ENCODE measurements at regions of chr3 and their contacts with region 1.

Region 1: DNA sequence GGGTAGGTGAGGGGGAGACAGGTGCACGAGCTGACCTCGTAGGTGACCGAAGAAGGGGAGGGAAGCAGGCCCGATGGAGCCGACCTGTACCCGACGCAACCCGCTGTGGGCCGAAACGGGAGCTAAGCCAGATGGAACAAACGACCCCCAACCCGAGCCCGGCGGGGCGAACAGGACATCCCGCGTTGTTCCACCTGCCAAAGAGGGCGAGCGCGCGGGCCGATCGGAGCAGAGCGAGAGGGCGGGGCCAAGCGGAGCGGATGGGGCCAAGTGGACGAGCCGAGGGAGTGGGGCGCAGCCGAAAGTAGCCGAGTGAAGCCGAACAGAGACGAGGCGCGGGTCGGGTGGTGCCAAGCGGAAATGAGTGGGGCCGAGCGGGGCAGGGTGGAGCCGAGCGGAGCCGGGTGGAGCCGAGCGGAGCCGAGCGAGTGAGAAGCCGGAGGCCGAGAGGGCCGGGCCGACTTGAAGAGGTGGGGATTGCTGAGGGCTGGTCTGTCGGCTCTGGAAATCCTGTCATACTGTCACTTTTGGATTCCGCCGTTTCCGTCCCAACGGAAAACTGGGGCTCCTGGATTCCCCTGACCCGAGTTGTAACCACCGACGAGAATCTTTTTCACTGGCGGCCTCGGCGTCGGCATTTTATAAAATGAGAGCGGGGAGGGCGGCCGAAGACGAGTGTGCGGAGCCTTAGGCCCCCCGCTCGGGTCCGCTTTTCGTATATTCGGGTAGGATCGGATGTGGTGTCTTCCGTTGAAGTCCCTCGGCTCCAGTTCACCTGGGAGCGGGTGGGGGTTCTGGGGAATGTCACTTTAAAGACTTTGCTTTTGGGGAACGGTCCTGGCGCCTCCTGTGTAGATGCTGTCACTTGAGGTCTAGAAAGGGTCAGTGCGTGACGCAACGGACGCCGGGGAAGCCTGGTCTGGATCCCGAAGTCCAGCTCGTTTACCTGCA is 15.6 kb upstream of the WNT7A start:
- DNase-seq: peak; percentile 86
- ATAC-seq: peak; percentile 99
- H3K4me3 Mint-ChIP-seq: peak overlapping the region; percentile 89
- H3K27ac Mint-ChIP-seq: peak overlapping the region; percentile 78
- H3K4me1 Mint-ChIP-seq: peaks cover 41% of the 10 kb centered on the region
- H3K27me3 Mint-ChIP-seq: peaks cover 5% of the 10 kb centered on the region
- CTCF ChIP-seq: no peak

Region 2: GRCh38 chr3:13673209-13673608 is 222.2 kb before region 1 on chr3:
- CTCF ChIA-PET with region 1: no interaction called
- POLR2A ChIA-PET with region 1: no interaction called
- intact Hi-C with region 1: no loop called
- DNase-seq: no peak
- ATAC-seq: no peak
- H3K4me3 Mint-ChIP-seq: no peak overlapping the region
- H3K27ac Mint-ChIP-seq: no peak overlapping the region
- H3K4me1 Mint-ChIP-seq: no peaks in the 10 kb centered on the region
- H3K27me3 Mint-ChIP-seq: peaks cover 17% of the 10 kb centered on the region
- CTCF ChIP-seq: no peak

Region 3: DNA sequence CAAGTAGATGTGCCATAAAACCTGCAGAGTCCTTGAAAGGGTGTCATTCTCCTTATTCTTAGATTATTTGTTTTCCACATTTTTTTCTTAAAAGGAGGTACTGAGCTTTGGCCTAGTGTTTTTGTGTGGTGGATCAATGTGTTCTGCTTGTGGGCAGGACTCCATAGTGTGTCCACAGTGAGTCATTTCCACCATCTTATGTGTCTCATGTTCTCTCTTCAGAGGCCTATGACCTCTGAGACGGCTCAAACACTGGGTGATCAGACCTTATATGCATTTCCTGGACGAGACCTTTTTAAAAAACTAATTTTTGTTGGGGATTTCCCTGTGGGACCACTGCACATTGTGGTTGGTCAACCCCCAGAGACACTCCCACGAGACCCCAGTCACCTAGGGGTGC is 135.8 kb after region 1 on chr3:
- CTCF ChIA-PET with region 1: no interaction called
- POLR2A ChIA-PET with region 1: no interaction called
- intact Hi-C with region 1: no loop called
- DNase-seq: no peak
- ATAC-seq: no peak
- H3K4me3 Mint-ChIP-seq: no peak overlapping the region
- H3K27ac Mint-ChIP-seq: no peak overlapping the region
- H3K4me1 Mint-ChIP-seq: no peaks in the 10 kb centered on the region
- H3K27me3 Mint-ChIP-seq: no peaks in the 10 kb centered on the region
- CTCF ChIP-seq: no peak

Region 4: GRCh38 chr3:14194865-14195264 is 299.4 kb after region 1 on chr3:
- CTCF ChIA-PET with region 1: no interaction called
- POLR2A ChIA-PET with region 1: no interaction called
- intact Hi-C with region 1: loop called (anchors 5 kb)
- DNase-seq: no peak
- ATAC-seq: no peak
- H3K4me3 Mint-ChIP-seq: no peak overlapping the region
- H3K27ac Mint-ChIP-seq: no peak overlapping the region
- H3K4me1 Mint-ChIP-seq: peaks cover 20% of the 10 kb centered on the region
- H3K27me3 Mint-ChIP-seq: no peaks in the 10 kb centered on the region
- CTCF ChIP-seq: no peak

Region 5: DNA sequence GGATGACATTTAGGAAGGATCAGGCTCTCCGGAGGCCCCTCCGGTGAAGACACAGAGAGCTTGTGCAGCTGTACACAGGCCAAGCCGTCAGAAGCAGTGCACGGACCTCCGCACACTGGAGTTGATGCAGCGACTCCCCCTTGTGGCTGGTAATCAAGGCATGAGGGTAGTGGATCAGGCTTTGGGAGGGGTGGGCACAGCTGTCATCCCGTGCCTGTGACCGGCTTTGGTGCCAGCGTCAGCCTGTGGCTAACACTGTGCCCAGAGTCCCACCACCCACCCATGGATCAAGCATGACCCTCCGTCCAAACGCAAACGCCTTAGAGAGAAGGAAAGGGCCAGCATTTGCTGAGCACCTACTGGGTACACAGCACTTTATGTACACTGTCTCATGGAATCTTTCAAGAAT is 652.9 kb after region 1 on chr3:
- CTCF ChIA-PET with region 1: interaction called, 3 read pairs
- POLR2A ChIA-PET with region 1: no interaction called
- intact Hi-C with region 1: loop called (anchors 1 kb)
- DNase-seq: no peak
- ATAC-seq: peak; percentile 47
- H3K4me3 Mint-ChIP-seq: no peak overlapping the region
- H3K27ac Mint-ChIP-seq: no peak overlapping the region
- H3K4me1 Mint-ChIP-seq: no peaks in the 10 kb centered on the region
- H3K27me3 Mint-ChIP-seq: peaks cover 27% of the 10 kb centered on the region
- CTCF ChIP-seq: no peak

Region 6: GRCh38 chr3:14651440-14652251 is 756.2 kb after region 1 on chr3 and contains the start of gene CCDC174:
- CTCF ChIA-PET with region 1: interaction called, 4 read pairs
- POLR2A ChIA-PET with region 1: no interaction called
- intact Hi-C with region 1: loop called (anchors 2 kb)
- DNase-seq: peak; percentile 86
- ATAC-seq: peak; percentile 97
- H3K4me3 Mint-ChIP-seq: peak within 1 kb of the TSS; percentile 95
- H3K27ac Mint-ChIP-seq: peak within 1 kb of the TSS; percentile 93
- H3K4me1 Mint-ChIP-seq: peaks cover 34% of the 10 kb centered on the region
- H3K27me3 Mint-ChIP-seq: no peaks in the 10 kb centered on the region
- CTCF ChIP-seq: no peak
- total RNA-seq, gene CCDC174: 30.2 and 32.4 TPM in 2 replicates

Region 7: GRCh38 chr3:14997941-14998340 is 1102.5 kb after region 1 on chr3:
- CTCF ChIA-PET with region 1: no interaction called
- POLR2A ChIA-PET with region 1: no interaction called
- intact Hi-C with region 1: no loop called
- DNase-seq: no peak
- ATAC-seq: no peak
- H3K4me3 Mint-ChIP-seq: no peak overlapping the region
- H3K27ac Mint-ChIP-seq: no peak overlapping the region
- H3K4me1 Mint-ChIP-seq: peaks cover 24% of the 10 kb centered on the region
- H3K27me3 Mint-ChIP-seq: no peaks in the 10 kb centered on the region
- CTCF ChIP-seq: no peak

Measured in activated B cell treated with CpG ODN at 0.5 μM for 24 hours (primary cell).